IMR-90 (cell line): ENCODE measurements at regions of chr12 and their contacts with region 1.

Region 1: GRCh38 chr12:56127888-56128669 is at the start of gene ESYT1:
- DNase-seq: peak; percentile 100
- ATAC-seq: peak; percentile 93
- H3K4me3 ChIP-seq: peak within 1 kb of the TSS; percentile 75
- H3K27ac ChIP-seq: peak within 1 kb of the TSS; percentile 44
- H3K4me1 ChIP-seq: peaks cover 6% of the 10 kb centered on the region; the same call in 1 of the 2 replicates
- H3K27me3 ChIP-seq: no peaks in the 10 kb centered on the region
- CTCF ChIP-seq: no peak
- POLR2A ChIP-seq: peak; percentile 71; the same call in 1 of the 2 replicates
- RAD21 ChIP-seq: no peak
- total RNA-seq, gene ESYT1: 137 and 150 TPM in 2 replicates

Region 2: DNA sequence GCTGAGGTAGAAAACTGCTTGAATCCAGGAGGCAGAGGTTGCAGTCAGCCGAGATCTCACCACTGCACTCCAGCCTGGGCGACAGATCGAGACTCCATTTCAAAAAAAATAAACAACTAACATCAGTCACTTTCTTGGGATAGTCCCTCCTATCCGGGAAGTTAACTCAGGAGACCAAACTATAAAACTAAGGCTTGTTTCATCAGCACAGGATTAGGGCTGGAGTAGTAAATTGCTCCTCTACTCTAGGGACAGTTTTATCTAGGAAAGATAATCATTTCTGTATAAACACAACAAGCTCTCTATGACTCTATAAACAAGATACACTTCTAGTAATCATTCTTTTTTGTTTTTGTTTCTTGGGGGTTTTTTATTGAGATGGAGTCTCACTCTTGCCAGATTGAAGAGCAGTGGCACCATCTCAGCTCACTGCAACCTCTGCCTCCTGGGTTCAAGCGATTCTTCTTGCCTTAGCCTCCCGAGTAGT is 74.6 kb before region 1 on chr12:
- CTCF ChIA-PET with region 1: no interaction called
- POLR2A ChIA-PET with region 1: no interaction called
- dilution Hi-C with region 1: no loop called
- in situ Hi-C with region 1: no loop called
- intact Hi-C with region 1: no loop called
- DNase-seq: no peak
- ATAC-seq: peak; percentile 71
- H3K4me3 ChIP-seq: no peak overlapping the region
- H3K27ac ChIP-seq: no peak overlapping the region
- H3K4me1 ChIP-seq: peaks cover 2% of the 10 kb centered on the region; the same call in 1 of the 2 replicates
- H3K27me3 ChIP-seq: no peaks in the 10 kb centered on the region
- CTCF ChIP-seq: no peak
- POLR2A ChIP-seq: no peak
- RAD21 ChIP-seq: no peak

Region 3: DNA sequence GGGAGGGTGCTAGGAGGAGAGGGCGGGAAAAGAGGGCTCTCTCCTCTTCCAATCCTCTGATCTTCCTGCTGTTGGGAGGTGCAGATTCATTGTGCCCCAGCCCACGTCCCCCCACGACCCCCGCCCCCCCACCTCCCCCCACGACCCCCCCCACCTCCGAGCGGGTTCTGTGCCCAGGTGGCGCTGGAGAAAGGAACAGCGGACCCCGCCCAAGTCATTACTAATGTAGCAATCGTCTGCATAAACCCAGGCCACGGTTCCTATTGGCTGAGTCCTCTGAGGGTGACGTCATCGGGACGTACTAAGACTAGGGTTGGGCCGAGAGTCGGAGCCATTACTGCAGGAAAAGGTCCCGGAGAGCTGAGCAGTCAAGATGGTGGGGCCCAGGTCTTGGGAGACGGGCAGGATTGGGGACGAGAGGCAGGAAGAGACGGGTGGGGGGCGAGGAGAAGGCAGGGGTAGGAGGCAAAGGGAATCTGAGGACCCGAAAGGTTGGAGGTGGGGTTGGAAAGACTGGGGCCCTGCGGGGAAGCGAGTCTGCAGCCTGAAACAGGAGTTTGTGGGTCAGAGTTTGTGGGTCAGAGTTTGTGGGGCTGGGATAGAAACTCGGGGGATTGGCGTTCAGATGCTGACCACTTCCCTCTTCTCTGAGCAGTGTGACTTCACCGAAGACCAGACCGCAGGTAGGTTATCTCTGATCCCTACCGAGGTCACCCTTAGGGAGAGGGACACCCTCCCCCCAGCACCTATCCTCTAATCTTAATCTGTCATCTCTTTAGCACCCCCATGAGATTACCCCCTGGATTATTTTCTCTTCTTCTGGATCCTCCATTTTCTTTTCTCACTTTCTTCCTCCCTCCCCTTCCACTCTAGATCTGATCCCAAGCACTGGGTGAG is 30.2 kb after region 1 on chr12 and contains the start of gene MYL6:
- CTCF ChIA-PET with region 1: no interaction called
- POLR2A ChIA-PET with region 1: interaction called, 8 read pairs
- dilution Hi-C with region 1: no loop called
- in situ Hi-C with region 1: no loop called
- intact Hi-C with region 1: loop called (anchors 2 kb)
- DNase-seq: peak; percentile 99
- ATAC-seq: peak; percentile 70
- H3K4me3 ChIP-seq: peak within 1 kb of the TSS; percentile 73
- H3K27ac ChIP-seq: peak within 1 kb of the TSS; percentile 90
- H3K4me1 ChIP-seq: peaks cover 18% of the 10 kb centered on the region
- H3K27me3 ChIP-seq: no peaks in the 10 kb centered on the region
- CTCF ChIP-seq: no peak
- POLR2A ChIP-seq: peak; percentile 99
- RAD21 ChIP-seq: no peak
- total RNA-seq, gene MYL6: 4,816 and 6,155 TPM in 2 replicates

Region 4: GRCh38 chr12:56425193-56425592 is 297.1 kb after region 1 on chr12:
- CTCF ChIA-PET with region 1: no interaction called
- POLR2A ChIA-PET with region 1: no interaction called
- dilution Hi-C with region 1: no loop called
- in situ Hi-C with region 1: no loop called
- intact Hi-C with region 1: no loop called
- DNase-seq: no peak
- ATAC-seq: no peak
- H3K4me3 ChIP-seq: no peak overlapping the region
- H3K27ac ChIP-seq: no peak overlapping the region
- H3K4me1 ChIP-seq: no peaks in the 10 kb centered on the region
- H3K27me3 ChIP-seq: no peaks in the 10 kb centered on the region
- CTCF ChIP-seq: no peak
- POLR2A ChIP-seq: no peak
- RAD21 ChIP-seq: no peak